Astrocyte of the spinal cord (primary cell): ENCODE measurements at regions of chr2 and their contacts with region 1.

Region 1: DNA sequence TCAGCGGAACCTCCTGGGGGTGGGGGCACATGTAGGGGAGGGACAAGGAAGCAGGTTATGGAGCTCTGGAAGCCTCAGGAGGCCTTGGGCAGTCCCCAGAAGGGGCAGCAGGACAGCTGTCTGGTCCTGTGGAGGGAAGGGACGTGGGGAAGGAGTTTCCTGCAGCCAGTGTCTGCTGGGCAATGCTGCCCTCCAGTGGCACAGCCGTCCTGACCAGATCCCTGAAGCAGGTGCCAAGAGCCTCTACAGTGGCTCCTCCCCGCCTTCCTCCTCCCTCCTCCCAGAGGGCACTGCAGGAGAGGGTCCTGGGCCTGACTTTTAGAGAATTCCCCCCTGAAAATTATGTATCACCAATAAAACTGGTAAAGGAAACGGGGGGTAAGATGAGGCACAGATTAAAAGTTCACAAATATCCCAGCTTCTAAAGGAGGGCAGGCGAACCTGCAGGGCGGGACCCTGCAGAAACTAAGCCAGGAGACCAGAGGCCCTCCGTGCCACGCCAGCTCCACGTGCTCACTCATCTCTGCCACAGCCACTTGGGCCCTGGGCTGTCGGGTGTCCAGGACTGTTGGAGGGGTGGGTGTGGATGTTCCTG is 258.5 kb downstream of the TWIST2 start:
- DNase-seq: peak; percentile 48
- H3K4me3 ChIP-seq: no peak overlapping the region
- CTCF ChIP-seq: peak; percentile 72

Region 2: DNA sequence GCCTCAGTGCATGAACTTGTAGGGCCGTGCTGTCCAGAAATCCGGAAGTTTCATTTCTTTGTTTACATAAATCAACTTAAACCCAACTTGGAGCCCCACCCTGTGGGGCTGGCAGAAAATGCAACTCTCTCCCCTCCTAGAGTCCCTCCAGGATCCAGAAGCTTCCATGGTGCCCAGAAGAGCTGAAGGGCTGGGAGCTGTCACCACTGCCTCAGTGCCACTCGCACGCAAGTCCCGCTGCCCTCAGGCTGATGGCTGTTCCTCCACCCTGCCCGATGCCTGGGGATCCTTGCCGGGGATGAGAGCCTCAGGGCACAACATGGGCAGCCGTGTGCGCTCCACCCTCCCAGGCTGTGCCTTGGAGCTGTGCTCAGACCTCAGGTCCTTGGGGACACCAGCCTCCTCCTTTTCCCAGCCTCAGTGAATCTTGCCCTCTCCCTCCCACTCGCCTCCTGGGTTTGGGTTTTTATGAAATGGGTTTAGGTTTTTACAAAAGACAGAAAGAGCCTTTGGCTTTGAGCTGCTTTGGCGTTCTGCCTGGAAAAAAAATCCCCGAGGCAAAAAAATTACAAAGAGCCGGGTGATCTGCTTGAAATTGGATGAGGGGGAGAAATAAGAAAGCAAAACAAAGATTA is 103.3 kb before region 1 on chr2:
- in situ Hi-C with region 1: loop called (anchors 25 kb)
- DNase-seq: peak; percentile 19
- H3K4me3 ChIP-seq: no peak overlapping the region
- CTCF ChIP-seq: peak; percentile 24